Endothelial cell of umbilical vein (primary cell): ENCODE measurements at regions of chr2 and their contacts with region 1.

Region 1: DNA sequence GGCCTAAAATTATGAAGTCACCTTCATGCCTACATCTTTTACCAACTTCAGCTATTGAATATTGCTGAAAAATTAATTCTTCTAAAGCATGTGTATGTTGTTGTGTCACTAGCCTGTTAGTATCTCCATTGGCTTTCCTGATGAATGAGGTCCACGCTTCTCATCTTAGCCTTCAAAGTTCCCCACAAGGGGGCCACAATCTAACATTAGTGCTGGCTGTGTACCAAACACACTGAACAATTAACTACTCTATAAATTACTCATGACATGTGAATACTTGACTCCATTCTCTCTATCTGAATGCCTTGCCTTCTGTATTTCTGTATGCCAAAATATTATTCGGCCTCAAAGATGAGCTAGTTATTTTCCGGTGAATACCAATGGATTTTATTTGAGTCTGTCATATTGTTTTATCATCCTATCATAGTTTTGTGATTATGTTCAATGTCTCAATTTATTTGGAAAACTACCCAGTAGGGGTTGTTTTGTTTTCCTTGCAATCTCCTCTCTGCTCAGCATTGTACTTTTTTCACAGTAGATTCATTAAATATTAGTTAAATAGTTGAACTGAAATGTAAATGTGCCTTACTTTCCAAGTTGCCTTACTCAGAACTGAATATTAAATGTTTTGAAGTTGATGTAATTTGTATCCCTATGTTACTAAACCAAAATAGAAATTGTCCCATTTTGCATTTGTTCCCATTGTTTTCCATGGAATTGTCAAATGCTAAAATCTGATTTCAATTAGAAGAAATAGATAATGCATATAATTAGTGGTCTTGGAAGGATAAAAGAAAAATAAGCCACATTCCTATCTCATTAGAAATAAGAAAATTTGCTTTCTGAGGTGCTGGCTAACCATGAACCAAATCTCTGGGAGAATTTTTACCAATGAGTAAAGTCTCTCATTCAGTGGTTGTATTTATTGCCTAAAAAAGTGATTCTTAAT is 208.4 kb upstream of the COL3A1 start:
- DNase-seq: peak; percentile 86
- H3K4me3 ChIP-seq: no peak overlapping the region
- H3K27ac ChIP-seq: no peak overlapping the region
- H3K4me1 ChIP-seq: no peaks in the 10 kb centered on the region
- H3K27me3 ChIP-seq: no peaks in the 10 kb centered on the region
- CTCF ChIP-seq: peak; percentile 50 to 58
- POLR2A ChIP-seq: no peak

Region 2: GRCh38 chr2:188529746-188530145 is 236.1 kb before region 1 on chr2:
- CTCF ChIA-PET with region 1: interaction called, 5 read pairs
- POLR2A ChIA-PET with region 1: no interaction called
- dilution Hi-C with region 1: no loop called
- intact Hi-C with region 1: loop called (anchors 1 kb)
- DNase-seq: no peak
- H3K4me3 ChIP-seq: no peak overlapping the region
- H3K27ac ChIP-seq: no peak overlapping the region
- H3K4me1 ChIP-seq: peaks cover 16% of the 10 kb centered on the region
- H3K27me3 ChIP-seq: no peaks in the 10 kb centered on the region
- CTCF ChIP-seq: no peak
- POLR2A ChIP-seq: no peak

Region 3: GRCh38 chr2:188983427-188984064 is 217.8 kb after region 1 on chr2:
- CTCF ChIA-PET with region 1: interaction called, 28 read pairs
- POLR2A ChIA-PET with region 1: no interaction called
- dilution Hi-C with region 1: no loop called
- intact Hi-C with region 1: no loop called
- DNase-seq: peak; percentile 37
- H3K4me3 ChIP-seq: no peak overlapping the region
- H3K27ac ChIP-seq: no peak overlapping the region
- H3K4me1 ChIP-seq: peaks cover 12% of the 10 kb centered on the region
- H3K27me3 ChIP-seq: no peaks in the 10 kb centered on the region
- CTCF ChIP-seq: peak; percentile 35
- POLR2A ChIP-seq: no peak